Esophagus muscularis mucosa (tissue), 4 donors: ENCODE measurements at regions of chr3 and their contacts with region 1.

Region 1: GRCh38 chr3:154758109-154758868 is 321.8 kb upstream of the MME start:
- DNase-seq: no peak
- H3K4me3 ChIP-seq: no peak overlapping the region
- H3K27ac ChIP-seq: no peak overlapping the region
- H3K4me1 ChIP-seq: peaks cover 0 to 6% (median 0%) of the 10 kb centered on the region in 4 donors
- H3K27me3 ChIP-seq: no peaks in the 10 kb centered on the region
- CTCF ChIP-seq: peak; percentile 44 to 55 (median 49)
- EP300 ChIP-seq: no peak
- POLR2A ChIP-seq: no peak

Region 2: GRCh38 chr3:155323063-155323666 is 564.9 kb after region 1 on chr3:
- intact Hi-C with region 1: loop called (anchors 2 kb)
- DNase-seq: no peak
- H3K4me3 ChIP-seq: no peak overlapping the region
- H3K27ac ChIP-seq: no peak overlapping the region
- H3K4me1 ChIP-seq: no peaks in the 10 kb centered on the region
- H3K27me3 ChIP-seq: no peaks in the 10 kb centered on the region
- CTCF ChIP-seq: peak; percentile 62 to 71 (median 63)
- EP300 ChIP-seq: no peak
- POLR2A ChIP-seq: no peak